RWPE1 (cell line): ENCODE measurements at regions of chr19 and their contacts with region 1.

Region 1: DNA sequence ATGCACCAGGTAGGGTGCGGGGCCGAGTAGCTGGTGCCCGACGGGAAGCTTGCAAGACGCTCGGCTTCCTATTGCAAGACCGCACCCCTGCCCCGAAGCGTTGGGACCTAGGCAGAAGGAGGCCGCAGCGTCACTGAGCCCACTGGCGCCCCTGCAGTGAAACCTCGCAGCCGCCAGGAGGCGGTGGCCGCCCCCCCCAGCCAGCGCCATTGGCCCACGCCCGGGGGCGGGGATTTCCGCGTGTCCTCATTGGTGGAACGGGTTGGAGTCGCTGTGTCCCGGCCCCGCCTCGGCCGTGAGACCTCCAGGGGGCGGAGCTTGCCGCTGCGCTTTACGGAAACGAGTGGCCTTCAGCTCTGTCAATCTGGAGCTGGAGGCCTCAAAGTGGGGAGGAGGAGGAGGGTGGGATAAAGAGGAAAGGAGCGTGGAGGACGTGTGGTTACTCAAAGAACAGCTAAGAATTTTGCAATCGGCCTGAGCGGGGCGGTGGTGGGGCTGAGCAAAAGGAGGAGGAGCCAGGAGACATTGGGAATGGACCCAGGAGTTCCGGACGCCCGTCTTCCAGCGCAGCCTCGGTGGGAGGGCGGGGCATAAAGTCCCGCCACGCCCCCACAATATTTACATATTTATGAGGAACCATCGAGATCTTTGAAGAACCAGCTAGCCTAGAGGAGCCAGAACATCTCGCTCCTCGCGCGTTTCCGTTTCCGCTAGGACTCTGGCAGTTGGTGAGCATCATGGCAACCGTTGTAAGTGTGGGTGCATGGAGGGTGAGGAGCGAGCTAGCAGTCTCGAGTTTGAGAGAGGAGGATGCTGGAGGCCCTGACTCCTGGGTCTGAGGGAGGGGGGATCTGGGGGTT is at the starts of genes GYS1 and RUVBL2:
- DNase-seq: peak; percentile 99
- H3K27ac ChIP-seq: peak within 1 kb of the TSS; percentile 91
- CTCF ChIP-seq: peak; percentile 97

Region 2: DNA sequence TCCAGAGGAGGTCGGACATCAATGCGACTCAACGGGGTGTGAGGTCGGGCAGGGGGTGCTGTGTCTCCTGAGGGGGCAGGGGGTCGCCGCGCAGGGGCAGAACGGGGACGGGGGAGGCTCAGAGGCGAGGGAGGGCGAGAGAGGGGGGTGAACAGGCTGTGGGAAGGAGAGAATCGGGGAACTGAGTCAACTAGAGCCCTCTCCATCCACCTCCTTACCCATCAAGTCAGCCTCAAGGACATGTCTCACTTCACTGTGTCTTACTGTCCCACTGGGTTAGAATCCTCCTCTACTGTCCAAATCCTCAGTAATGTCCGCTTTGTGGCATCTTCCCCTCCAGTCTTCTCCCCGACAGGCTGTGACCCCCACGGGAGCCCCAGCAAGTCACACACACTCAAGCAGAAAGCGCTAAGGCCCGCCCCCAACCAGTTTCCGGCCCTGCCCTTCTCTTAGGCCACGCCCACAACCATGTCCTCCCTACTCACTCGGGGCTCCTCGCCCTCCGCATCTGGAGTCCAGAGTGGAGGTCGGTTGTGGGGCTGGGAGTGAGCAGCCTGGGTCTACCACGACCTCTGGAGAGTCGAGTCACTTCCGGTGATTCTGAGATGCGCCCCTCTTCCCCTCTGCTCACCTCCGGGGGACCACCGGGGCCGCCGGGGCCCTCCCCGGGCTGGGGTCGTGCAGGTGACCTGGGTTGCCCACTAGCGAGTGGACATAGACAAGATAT is 134.3 kb before region 1 on chr19:
- CTCF ChIA-PET with region 1: no interaction called
- POLR2A ChIA-PET with region 1: no interaction called
- DNase-seq: no peak
- H3K27ac ChIP-seq: no peak overlapping the region
- CTCF ChIP-seq: no peak

Region 3: DNA sequence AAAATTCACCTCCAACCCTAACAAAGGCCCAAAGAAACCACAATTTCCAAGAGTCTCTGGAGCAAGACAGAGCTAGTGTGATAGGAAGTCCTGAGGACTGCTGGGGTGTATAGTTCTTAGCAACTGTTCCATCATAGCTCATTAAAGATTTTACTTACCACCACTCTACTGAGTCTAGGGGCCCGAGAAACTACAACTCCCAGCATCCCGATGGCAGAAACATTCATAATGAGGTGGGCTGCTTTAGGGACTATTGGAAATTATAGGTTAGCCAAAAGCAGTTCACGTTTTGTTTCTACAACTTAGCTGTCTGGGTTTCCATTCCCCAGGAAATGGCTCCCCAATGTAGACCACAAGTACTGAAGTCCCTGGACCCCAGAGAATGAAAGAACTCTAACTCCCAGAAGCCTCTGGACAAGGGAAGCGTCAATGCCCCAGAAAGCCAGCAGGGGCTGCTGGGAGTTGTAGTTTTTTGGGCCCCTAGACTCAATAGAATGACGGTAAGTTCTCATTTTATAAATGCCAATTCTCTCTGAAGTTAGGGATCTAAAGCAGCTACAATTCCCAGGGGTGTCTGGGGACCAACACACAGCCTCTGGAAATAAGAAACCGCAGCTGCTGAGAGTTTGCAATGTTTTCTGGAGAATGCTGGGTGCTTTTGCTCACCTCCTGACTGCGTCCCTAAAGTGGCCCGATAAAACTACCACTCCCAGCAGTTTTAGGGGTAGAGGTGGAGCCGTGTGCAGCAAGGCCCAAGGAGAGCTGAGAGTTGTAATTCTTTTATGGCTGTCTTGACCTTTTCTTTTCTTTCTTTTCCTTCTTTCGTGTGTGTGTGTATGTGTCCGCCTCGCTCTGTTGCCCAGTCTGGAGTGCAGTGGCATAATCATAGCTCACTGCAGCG is 17.2 kb before region 1 on chr19:
- CTCF ChIA-PET with region 1: interaction called, 11 read pairs
- POLR2A ChIA-PET with region 1: interaction called, 9 read pairs
- DNase-seq: no peak
- H3K27ac ChIP-seq: peak overlapping the region; percentile 90
- CTCF ChIP-seq: no peak